Right cardiac atrium (tissue), 5 donors: ENCODE measurements at regions of chr18 and their contacts with region 1.

Region 1: DNA sequence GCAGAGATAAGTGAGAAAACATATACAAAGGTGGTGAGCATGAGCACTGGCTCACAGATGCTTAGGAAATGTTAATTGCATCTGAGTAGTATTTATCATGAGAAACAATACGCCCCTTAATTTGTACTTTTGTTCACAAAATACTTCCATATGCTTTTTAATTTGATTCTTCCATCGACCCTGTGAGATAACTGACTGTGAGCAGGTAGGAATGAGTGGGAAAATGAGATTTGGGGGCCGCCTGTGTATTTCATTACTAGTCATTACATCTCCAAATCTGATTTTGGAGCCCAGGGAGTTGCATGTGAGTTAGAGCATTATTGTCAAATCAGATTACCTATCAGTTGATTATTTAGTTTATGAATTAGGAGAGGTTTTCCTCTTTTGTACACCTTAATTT is 36.7 kb upstream of the NPC1 start:
- DNase-seq: no peak
- ATAC-seq: no peak
- H3K4me3 ChIP-seq: no peak overlapping the region
- H3K27ac ChIP-seq: no peak overlapping the region
- H3K4me1 ChIP-seq: no peaks in the 10 kb centered on the region
- H3K27me3 ChIP-seq: no peaks in the 10 kb centered on the region

Region 2: GRCh38 chr18:23703057-23703986 is 80.3 kb after region 1 on chr18:
- intact Hi-C with region 1: loop called in 2 of 4 experiments (anchors 5 kb)
- DNase-seq: no peak
- ATAC-seq: peak; percentile 67 to 84
- H3K4me3 ChIP-seq: no peak overlapping the region
- H3K27ac ChIP-seq: no peak overlapping the region
- H3K4me1 ChIP-seq: no peaks in the 10 kb centered on the region
- H3K27me3 ChIP-seq: no peaks in the 10 kb centered on the region

Region 3: DNA sequence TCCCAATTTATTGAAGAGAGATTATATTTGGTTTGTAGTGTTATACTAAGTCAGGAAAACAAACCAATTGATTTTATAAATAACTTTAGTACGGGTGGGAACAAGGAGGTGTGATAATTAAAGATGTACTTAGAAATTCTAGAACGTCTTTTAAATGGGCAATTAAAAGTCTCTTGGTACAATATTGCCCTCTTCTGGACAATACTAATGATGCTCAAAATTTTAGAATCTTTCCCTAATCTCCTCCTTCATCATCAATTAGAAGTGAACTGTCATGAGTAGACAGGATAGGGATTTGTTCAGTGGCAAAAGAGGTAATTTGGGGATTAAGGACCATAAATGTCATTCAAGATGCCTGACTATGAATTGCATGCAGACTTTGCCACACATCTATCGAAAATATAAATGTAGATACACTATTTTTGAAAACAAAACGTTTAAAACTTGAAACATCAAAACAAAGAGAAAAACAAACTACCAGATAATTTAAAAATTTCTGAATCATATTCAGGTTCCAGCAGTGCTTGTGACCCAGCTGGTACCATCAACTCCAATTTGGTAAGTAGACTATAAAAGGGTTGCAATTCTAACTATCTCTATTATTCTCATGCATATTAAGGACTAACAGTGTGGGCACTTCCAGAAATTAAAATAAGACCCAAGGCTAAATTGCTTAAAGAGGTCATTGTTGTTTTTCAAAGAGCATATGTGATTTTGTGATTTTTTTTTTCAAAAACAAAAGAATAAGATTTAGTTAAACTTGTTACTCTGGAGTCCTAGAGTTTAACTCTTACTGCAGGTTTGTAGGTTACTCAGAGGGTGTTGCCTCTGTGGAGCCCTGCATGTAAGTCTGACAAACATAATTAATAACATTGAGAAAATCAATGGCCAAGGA is 189.8 kb after region 1 on chr18:
- intact Hi-C with region 1: loop called (anchors 5 kb)
- DNase-seq: no peak
- ATAC-seq: no peak
- H3K4me3 ChIP-seq: no peak overlapping the region
- H3K27ac ChIP-seq: no peak overlapping the region
- H3K4me1 ChIP-seq: no peaks in the 10 kb centered on the region
- H3K27me3 ChIP-seq: no peaks in the 10 kb centered on the region